ENCODE measurements at regions of chr15 and their contacts with region 1.

Region 1: DNA sequence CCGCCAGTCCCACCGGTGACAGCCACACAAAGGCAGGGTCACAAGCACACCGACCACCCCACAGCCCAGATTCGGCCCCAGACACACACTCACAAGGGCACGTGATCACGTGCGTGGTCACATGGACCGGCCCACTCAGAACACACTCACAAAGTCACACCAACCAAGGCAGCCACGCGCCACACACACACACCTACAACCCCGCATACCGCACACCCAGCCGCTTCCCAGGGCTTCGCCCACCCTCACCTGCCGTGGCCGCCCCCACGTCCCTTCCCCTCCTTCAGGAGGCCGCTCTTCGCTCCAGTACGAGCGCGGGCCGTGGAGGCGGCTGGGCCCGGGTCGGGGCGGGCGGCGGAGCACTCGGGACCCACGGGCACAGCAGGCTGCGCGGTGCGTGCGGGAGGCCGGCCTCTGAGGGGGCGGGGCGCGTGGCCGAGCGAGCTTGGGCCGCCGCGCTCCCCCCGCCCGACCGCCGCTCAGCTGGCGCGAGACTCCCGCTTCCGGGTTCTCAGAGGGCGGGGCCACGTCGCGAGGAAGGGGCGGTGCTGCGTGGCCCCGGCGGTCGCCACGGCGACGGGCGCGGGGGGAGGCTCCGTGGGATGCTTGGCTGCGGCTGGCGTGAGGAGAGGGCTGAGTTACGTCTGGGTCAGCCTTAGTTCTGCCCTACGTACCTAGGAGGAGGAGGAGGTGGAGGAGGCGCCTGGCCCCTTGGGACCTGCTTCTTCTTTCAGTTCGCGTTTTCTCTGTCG is at the start of gene SPG21:
- DNase-seq: peak; percentile 77 to 97 (median 85)
- ATAC-seq: peak; percentile 95
- H3K4me3 ChIP-seq: peak within 1 kb of the TSS; percentile 83
- H3K4me3 Mint-ChIP-seq: peak within 1 kb of the TSS; percentile 93 to 99 (median 97)
- H3K27ac ChIP-seq: peak within 1 kb of the TSS; percentile 76
- H3K27ac Mint-ChIP-seq: peak within 1 kb of the TSS; percentile 91 to 98 (median 94)
- H3K4me1 ChIP-seq: peaks cover 0 to 19% of the 10 kb centered on the region in 2 donors
- H3K4me1 Mint-ChIP-seq: peaks cover 33 to 55% (median 48%) of the 10 kb centered on the region in 7 donors
- H3K27me3 ChIP-seq: no peaks in the 10 kb centered on the region
- H3K27me3 Mint-ChIP-seq: no peaks in the 10 kb centered on the region
- total RNA-seq, gene SPG21: 42.5 to 72.3 (median 60.0) TPM

Region 2: DNA sequence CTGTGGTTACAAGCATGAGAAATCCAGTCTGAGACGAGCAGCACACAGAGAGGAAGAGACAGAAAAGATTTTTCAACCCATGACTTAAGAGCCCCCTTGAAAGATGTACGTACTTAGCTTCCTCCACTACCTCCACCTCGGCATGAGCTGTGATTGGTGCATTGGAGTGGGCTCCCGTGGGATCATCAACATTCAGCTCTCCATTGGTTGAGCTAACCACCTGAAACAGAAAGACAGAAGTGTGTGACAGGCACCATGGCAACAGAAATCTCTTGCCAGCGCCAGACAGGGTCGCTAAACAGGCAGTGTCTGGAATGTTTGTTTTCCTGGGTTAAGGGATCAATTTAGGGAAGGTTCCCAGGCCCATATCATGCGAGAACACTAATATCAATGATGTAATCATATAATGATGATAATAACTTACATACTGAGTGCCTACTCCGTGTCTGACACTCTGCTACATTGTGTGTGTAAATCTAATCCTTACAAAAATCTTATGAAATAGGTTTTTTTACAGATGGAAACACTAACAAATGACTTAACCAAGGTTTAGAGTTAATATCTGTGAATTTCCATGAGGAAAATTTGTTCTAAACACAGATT is 809.3 kb before region 1 on chr15:
- CTCF ChIA-PET with region 1: no interaction called
- POLR2A ChIA-PET with region 1: no interaction called
- intact Hi-C with region 1: no loop called
- DNase-seq: no peak
- ATAC-seq: peak; percentile 49
- H3K4me3 ChIP-seq: no peak overlapping the region
- H3K4me3 Mint-ChIP-seq: no peak overlapping the region
- H3K27ac ChIP-seq: no peak overlapping the region
- H3K27ac Mint-ChIP-seq: peak overlapping the region in 1 of 9 donors; percentile 5
- H3K4me1 ChIP-seq: no peaks in the 10 kb centered on the region
- H3K4me1 Mint-ChIP-seq: peaks cover 0 to 3% (median 0%) of the 10 kb centered on the region in 7 donors
- H3K27me3 ChIP-seq: no peaks in the 10 kb centered on the region
- H3K27me3 Mint-ChIP-seq: no peaks in the 10 kb centered on the region

Region 3: GRCh38 chr15:64503197-64503596 is 486.4 kb before region 1 on chr15:
- CTCF ChIA-PET with region 1: no interaction called
- POLR2A ChIA-PET with region 1: no interaction called
- intact Hi-C with region 1: no loop called
- DNase-seq: peak in 5 of 9 donors; percentile 24 to 41 (median 34)
- ATAC-seq: peak; percentile 56
- H3K4me3 ChIP-seq: peak overlapping the region; percentile 47
- H3K4me3 Mint-ChIP-seq: peak overlapping the region; percentile 58 to 82 (median 68)
- H3K27ac ChIP-seq: peak overlapping the region; percentile 68
- H3K27ac Mint-ChIP-seq: peak overlapping the region; percentile 46 to 98 (median 85)
- H3K4me1 ChIP-seq: peaks cover 39 to 85% of the 10 kb centered on the region in 2 donors
- H3K4me1 Mint-ChIP-seq: peaks cover 62 to 98% (median 87%) of the 10 kb centered on the region in 7 donors
- H3K27me3 ChIP-seq: no peaks in the 10 kb centered on the region
- H3K27me3 Mint-ChIP-seq: no peaks in the 10 kb centered on the region

Region 4: DNA sequence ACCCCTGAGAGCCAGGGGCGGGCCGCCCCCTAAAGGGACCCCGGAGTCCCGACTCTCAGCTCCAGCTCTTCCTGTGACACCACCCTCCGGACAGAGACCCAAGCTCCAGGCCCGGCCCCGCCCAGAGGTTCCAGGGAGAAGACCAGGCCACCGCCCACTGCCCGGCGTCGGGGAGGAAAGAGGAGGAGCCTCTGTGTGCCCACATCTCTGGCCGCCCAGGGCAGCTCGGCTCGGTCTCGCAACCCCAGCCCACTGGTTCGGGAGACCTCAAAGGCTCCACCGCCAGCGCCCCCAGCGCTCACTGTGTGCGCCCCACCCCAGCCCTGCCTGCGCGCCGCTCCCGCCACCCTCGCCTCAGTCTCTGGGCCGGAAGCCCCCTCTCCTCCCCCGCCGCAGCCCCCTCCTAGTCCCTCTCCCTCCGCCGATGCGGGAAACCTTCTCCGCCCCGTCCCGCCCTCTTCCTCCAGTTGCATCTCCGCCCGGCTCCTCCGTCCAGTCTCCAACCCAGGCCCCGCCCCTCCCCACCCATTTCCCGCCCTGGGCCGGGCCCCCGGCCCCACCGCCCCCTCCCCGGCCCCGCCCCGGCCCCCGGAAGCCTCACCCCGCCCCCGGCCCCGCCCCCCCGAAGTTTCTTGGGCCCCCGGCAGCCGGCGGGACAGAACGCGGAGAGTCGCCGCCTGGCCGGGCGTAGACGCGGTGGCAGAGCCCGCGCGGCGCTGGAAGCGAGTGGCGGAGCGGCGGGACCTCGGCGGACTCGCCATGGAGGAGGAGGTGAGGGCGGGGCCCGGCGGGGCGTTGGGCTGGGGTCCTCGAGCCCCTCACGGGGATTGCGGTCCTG is 148.1 kb before region 1 on chr15 and contains the start of gene PLEKHO2:
- CTCF ChIA-PET with region 1: no interaction called
- POLR2A ChIA-PET with region 1: no interaction called
- intact Hi-C with region 1: loop called (anchors 2 to 5 kb)
- DNase-seq: peak; percentile 70 to 88 (median 80)
- ATAC-seq: peak; percentile 85
- H3K4me3 ChIP-seq: peak within 1 kb of the TSS; percentile 65
- H3K4me3 Mint-ChIP-seq: peak within 1 kb of the TSS; percentile 85 to 98 (median 96)
- H3K27ac ChIP-seq: peak within 1 kb of the TSS; percentile 81
- H3K27ac Mint-ChIP-seq: peak within 1 kb of the TSS; percentile 83 to 96 (median 91)
- H3K4me1 ChIP-seq: peaks cover 48 to 62% of the 10 kb centered on the region in 2 donors
- H3K4me1 Mint-ChIP-seq: peaks cover 63 to 89% (median 86%) of the 10 kb centered on the region in 7 donors
- H3K27me3 ChIP-seq: no peaks in the 10 kb centered on the region
- H3K27me3 Mint-ChIP-seq: no peaks in the 10 kb centered on the region
- total RNA-seq, gene PLEKHO2: 8.6 to 52.3 (median 14.0) TPM

Region 5: GRCh38 chr15:65133548-65134200 is 144.1 kb after region 1 on chr15 and contains the start of gene PDCD7:
- CTCF ChIA-PET with region 1: no interaction called
- POLR2A ChIA-PET with region 1: no interaction called
- intact Hi-C with region 1: no loop called
- DNase-seq: peak; percentile 52 to 89 (median 81)
- ATAC-seq: peak; percentile 95
- H3K4me3 ChIP-seq: peak within 1 kb of the TSS; percentile 81
- H3K4me3 Mint-ChIP-seq: peak within 1 kb of the TSS; percentile 88 to 100 (median 92)
- H3K27ac ChIP-seq: peak within 1 kb of the TSS; percentile 94
- H3K27ac Mint-ChIP-seq: peak within 1 kb of the TSS; percentile 90 to 98 (median 96)
- H3K4me1 ChIP-seq: peaks cover 6 to 14% of the 10 kb centered on the region in 2 donors
- H3K4me1 Mint-ChIP-seq: peaks cover 20 to 43% (median 35%) of the 10 kb centered on the region in 7 donors
- H3K27me3 ChIP-seq: no peaks in the 10 kb centered on the region
- H3K27me3 Mint-ChIP-seq: peaks cover 0 to 2% (median 0%) of the 10 kb centered on the region in 5 donors
- total RNA-seq, gene PDCD7: 23.0 to 38.6 (median 36.9) TPM

Region 6: GRCh38 chr15:65298731-65299130 is 309.1 kb after region 1 on chr15:
- CTCF ChIA-PET with region 1: no interaction called
- POLR2A ChIA-PET with region 1: interaction called, 3 read pairs
- intact Hi-C with region 1: loop called in 1 of 2 experiments (anchors 5 kb)
- DNase-seq: no peak
- ATAC-seq: no peak
- H3K4me3 ChIP-seq: no peak overlapping the region
- H3K4me3 Mint-ChIP-seq: peak overlapping the region; percentile 64 to 97 (median 84)
- H3K27ac ChIP-seq: peak overlapping the region; percentile 54
- H3K27ac Mint-ChIP-seq: peak overlapping the region; percentile 10 to 95 (median 78)
- H3K4me1 ChIP-seq: peaks cover 17 to 20% of the 10 kb centered on the region in 2 donors
- H3K4me1 Mint-ChIP-seq: peaks cover 12 to 42% (median 34%) of the 10 kb centered on the region in 7 donors
- H3K27me3 ChIP-seq: no peaks in the 10 kb centered on the region
- H3K27me3 Mint-ChIP-seq: peaks cover 0 to 2% (median 0%) of the 10 kb centered on the region in 5 donors

Region 7: GRCh38 chr15:65516997-65517865 is 527.6 kb after region 1 on chr15 and contains the start of gene DPP8:
- CTCF ChIA-PET with region 1: no interaction called
- POLR2A ChIA-PET with region 1: no interaction called
- intact Hi-C with region 1: no loop called
- DNase-seq: peak; percentile 88 to 96 (median 92)
- ATAC-seq: peak; percentile 98
- H3K4me3 ChIP-seq: peak within 1 kb of the TSS; percentile 75
- H3K4me3 Mint-ChIP-seq: peak within 1 kb of the TSS; percentile 93 to 100 (median 96)
- H3K27ac ChIP-seq: peak within 1 kb of the TSS; percentile 83
- H3K27ac Mint-ChIP-seq: peak within 1 kb of the TSS; percentile 86 to 99 (median 94)
- H3K4me1 ChIP-seq: peaks cover 22 to 25% of the 10 kb centered on the region in 2 donors
- H3K4me1 Mint-ChIP-seq: peaks cover 30 to 51% (median 44%) of the 10 kb centered on the region in 7 donors
- H3K27me3 ChIP-seq: no peaks in the 10 kb centered on the region
- H3K27me3 Mint-ChIP-seq: no peaks in the 10 kb centered on the region
- total RNA-seq, gene DPP8: 38.4 to 54.6 (median 40.8) TPM

Region 8: GRCh38 chr15:66504563-66505429 is 1515.2 kb after region 1 on chr15 and contains the starts of genes RPL4 and ZWILCH:
- CTCF ChIA-PET with region 1: no interaction called
- POLR2A ChIA-PET with region 1: no interaction called
- intact Hi-C with region 1: loop called in 1 of 2 experiments (anchors 10 kb)
- DNase-seq: peak; percentile 65 to 88 (median 83)
- ATAC-seq: peak; percentile 93
- H3K4me3 ChIP-seq: peak within 1 kb of the TSS; percentile 99
- H3K4me3 Mint-ChIP-seq: peak within 1 kb of the TSS; percentile 90 to 100 (median 100)
- H3K27ac ChIP-seq: peak within 1 kb of the TSS; percentile 93
- H3K27ac Mint-ChIP-seq: peak within 1 kb of the TSS; percentile 92 to 100 (median 99)
- H3K4me1 ChIP-seq: peaks cover 13 to 22% of the 10 kb centered on the region in 2 donors
- H3K4me1 Mint-ChIP-seq: peaks cover 21 to 57% (median 41%) of the 10 kb centered on the region in 7 donors
- H3K27me3 ChIP-seq: no peaks in the 10 kb centered on the region
- H3K27me3 Mint-ChIP-seq: no peaks in the 10 kb centered on the region
- total RNA-seq, gene RPL4: 2,229 to 4,292 (median 4,136) TPM
- total RNA-seq, gene ZWILCH: 5.6 to 20.3 (median 6.8) TPM

Measured in naive thymus-derived CD4-positive, alpha-beta T cell (primary cell).